GM13976 (cell line): ENCODE measurements at regions of chr10 and their contacts with region 1.

Region 1: DNA sequence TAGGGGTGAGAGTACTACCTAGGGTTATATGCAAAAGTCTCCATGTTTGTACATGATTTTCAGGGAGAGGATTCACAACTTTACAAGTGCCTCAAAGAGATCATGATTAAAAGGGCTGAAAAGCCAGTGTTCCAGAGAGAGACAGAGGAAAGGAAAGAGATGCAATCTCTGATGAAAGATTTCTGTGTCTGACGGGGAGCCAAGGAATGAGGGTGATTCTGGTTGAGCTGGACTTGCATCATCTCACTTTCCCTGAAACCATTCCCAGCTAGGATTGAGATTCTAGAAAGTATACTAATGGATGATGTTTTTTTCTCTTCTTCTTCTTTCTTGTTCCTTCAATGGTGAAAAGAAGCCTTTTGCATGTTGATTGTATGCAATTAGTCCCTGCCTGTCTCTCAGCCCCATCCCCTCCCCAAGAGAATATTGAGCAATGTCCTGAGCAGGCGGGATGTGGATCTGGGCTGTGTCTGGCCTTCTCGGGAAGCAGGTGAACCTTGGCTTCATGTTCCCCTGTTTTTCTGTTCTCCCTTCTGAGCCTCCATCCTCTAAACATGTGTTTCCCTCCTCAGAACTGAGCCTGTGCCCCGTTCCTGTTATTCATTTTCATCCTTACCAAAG is 186.1 kb downstream of the ZNF365 start:
- DNase-seq: no peak
- CTCF ChIP-seq: no peak

Region 2: GRCh38 chr10:62354916-62355315 is 205.4 kb before region 1 on chr10:
- in situ Hi-C with region 1: no loop called
- DNase-seq: no peak
- CTCF ChIP-seq: no peak

Region 3: GRCh38 chr10:62437696-62438095 is 122.6 kb before region 1 on chr10:
- in situ Hi-C with region 1: loop called (anchors 10 kb)
- DNase-seq: peak; percentile 22
- CTCF ChIP-seq: peak; percentile 50